ENCODE measurements at regions of chr3 and their contacts with region 1.

Region 1: GRCh38 chr3:44021651-44022594 is 219.8 kb upstream of the TOPAZ1 start:
- DNase-seq: peak; percentile 30
- ATAC-seq: no peak
- H3K4me3 ChIP-seq: peak overlapping the region in 3 of 5 experiments; percentile 38 to 41 (median 39)
- H3K4me3 Mint-ChIP-seq: peak overlapping the region; percentile 65
- H3K27ac ChIP-seq: no peak overlapping the region
- H3K27ac Mint-ChIP-seq: no peak overlapping the region
- H3K4me1 ChIP-seq: peaks cover 10 to 14% of the 10 kb centered on the region in 2 donors
- H3K4me1 Mint-ChIP-seq: peaks cover 13% of the 10 kb centered on the region
- H3K27me3 ChIP-seq: peaks cover 0 to 34% (median 24%) of the 10 kb centered on the region in 4 experiments
- H3K27me3 Mint-ChIP-seq: peaks cover 42% of the 10 kb centered on the region
- CTCF ChIP-seq: no peak

Region 2: DNA sequence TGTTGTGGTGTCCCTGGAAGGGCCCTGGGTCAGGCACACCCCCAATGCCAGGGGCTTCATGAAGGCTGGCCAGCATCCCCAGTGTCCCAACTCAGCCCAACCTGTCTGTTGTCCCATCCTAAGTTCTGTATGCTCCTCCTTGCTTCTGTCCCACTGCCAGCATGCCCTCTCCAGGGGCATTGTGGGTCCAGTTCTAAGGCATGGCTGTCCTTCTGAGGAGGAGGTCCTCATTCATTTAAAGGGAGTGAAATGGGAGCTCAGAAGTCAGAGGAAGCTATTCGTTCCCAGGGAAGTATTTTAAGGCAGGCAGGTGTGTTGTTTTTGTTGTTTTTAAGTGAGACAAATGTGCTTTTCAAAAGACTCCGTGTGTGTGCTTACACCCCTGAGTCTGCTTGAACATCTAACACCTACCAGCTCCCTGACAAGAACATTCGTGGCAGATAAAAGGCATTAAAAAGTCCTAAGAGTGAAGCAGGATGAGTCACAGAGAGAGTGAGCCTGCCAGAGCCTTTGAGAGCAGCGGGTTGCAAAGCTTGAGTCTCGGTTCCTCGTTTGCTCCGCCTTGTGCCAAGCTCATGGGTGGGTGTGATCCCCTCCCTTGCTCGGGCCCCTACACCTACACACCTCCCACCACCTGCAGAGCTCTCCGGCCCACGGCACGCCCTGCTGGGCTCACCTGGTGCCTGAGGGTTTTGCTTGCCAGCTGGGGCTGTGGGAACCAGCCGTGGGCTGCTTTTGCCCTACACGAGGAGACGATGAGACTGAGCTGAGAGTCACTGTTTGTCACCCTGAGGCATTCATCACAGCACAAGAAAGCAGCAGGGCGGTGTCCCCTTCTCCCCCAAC is 36.3 kb after region 1 on chr3:
- CTCF ChIA-PET with region 1: no interaction called
- POLR2A ChIA-PET with region 1: no interaction called
- intact Hi-C with region 1: loop called (anchors 5 kb)
- DNase-seq: peak; percentile 84
- ATAC-seq: peak; percentile 94
- H3K4me3 ChIP-seq: peak overlapping the region in 2 of 5 experiments; percentile 13 to 21
- H3K4me3 Mint-ChIP-seq: peak overlapping the region; percentile 80
- H3K27ac ChIP-seq: peak overlapping the region; percentile 42 to 54
- H3K27ac Mint-ChIP-seq: peak overlapping the region; percentile 91
- H3K4me1 ChIP-seq: peaks cover 23 to 27% of the 10 kb centered on the region in 2 donors
- H3K4me1 Mint-ChIP-seq: peaks cover 33% of the 10 kb centered on the region
- H3K27me3 ChIP-seq: peaks cover 0 to 3% (median 0%) of the 10 kb centered on the region in 4 experiments
- H3K27me3 Mint-ChIP-seq: peaks cover 4% of the 10 kb centered on the region
- CTCF ChIP-seq: no peak